Stomach (tissue), 19 donors: ENCODE measurements at regions of chr2 and their contacts with region 1.

Region 1: DNA sequence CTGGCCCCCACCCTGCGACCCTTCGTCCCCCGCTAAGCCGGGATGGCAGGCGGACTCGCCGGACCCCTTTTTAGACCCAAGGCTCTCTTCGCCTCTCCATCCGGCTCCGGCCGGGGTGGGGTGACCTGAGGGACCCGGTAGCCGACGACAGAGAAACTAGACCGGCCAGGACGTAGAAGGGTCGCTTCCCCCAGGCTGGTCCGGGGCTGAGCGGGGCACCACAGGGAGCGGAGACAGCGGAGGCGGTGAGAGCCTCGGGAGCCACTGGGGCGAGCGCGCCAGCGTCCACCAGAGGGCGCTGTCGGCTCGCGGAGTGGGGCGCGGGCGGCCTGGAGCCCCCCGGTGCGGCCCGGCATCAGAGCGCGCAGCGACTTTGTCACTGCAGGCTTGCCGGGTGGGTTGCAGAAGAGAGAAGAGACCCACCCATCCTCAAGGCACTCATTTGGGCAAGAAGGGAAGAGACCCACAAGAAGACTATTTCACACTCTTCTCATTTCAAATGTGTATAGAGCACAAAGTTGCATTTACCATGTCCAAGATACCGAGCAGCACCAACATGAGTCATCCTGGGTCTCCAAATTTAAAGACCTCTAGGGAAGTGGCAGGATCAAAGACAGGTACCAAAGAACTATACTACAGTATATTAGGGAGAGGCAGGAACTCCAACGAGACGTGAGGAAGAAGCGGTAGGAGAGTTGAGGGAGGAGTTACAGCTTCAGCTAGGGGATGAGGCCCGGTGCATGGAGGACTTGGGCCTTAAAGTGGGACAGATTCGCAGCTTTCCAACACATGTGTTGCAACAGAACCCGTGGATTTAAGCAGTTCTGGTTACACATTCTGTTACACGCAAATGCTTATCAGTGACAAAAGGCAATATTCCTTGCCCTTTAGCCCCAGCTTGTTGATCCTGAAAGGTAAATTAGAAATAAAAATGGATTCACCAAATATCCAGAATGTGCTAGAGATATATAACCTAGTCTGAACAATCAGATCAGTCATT is 7.6 kb upstream of the PRKCE start:
- DNase-seq: peak; percentile 79 to 91
- H3K4me3 ChIP-seq: peak overlapping the region; percentile 52 to 60 (median 58)
- H3K27ac ChIP-seq: peak overlapping the region in 3 of 5 donors; percentile 70 to 83 (median 76)
- H3K4me1 ChIP-seq: peaks cover 6 to 28% (median 18%) of the 10 kb centered on the region in 4 donors
- H3K27me3 ChIP-seq: peaks cover 0 to 15% (median 0%) of the 10 kb centered on the region in 3 donors
- CTCF ChIP-seq: peak in 6 of 7 experiments; percentile 92 to 99 (median 97)
- EP300 ChIP-seq: no peak
- POLR2A ChIP-seq: no peak

Region 2: GRCh38 chr2:45778720-45779171 is 134.9 kb after region 1 on chr2:
- intact Hi-C with region 1: loop called (anchors 5 kb)
- DNase-seq: peak; percentile 72
- H3K4me3 ChIP-seq: no peak overlapping the region
- H3K27ac ChIP-seq: no peak overlapping the region
- H3K4me1 ChIP-seq: peaks cover 0 to 35% (median 17%) of the 10 kb centered on the region in 4 donors
- H3K27me3 ChIP-seq: no peaks in the 10 kb centered on the region
- CTCF ChIP-seq: peak in 5 of 7 experiments; percentile 49 to 75 (median 67)
- EP300 ChIP-seq: no peak
- POLR2A ChIP-seq: no peak

Region 3: GRCh38 chr2:45935791-45936622 is 292.2 kb after region 1 on chr2:
- intact Hi-C with region 1: loop called (anchors 5 kb)
- DNase-seq: peak; percentile 85 to 93
- H3K4me3 ChIP-seq: no peak overlapping the region
- H3K27ac ChIP-seq: peak overlapping the region in 4 of 5 donors; percentile 24 to 83 (median 64)
- H3K4me1 ChIP-seq: peaks cover 12 to 45% (median 36%) of the 10 kb centered on the region in 4 donors
- H3K27me3 ChIP-seq: no peaks in the 10 kb centered on the region
- CTCF ChIP-seq: peak in 5 of 7 experiments; percentile 53 to 89 (median 81)
- EP300 ChIP-seq: no peak
- POLR2A ChIP-seq: no peak